AG04450 (cell line): ENCODE measurements at regions of chr2 and their contacts with region 1.

Region 1: GRCh38 chr2:204325468-204325867 is 219.8 kb upstream of the PARD3B start:
- DNase-seq: peak; percentile 66
- H3K4me3 ChIP-seq: no peak overlapping the region
- H3K27ac ChIP-seq: no peak overlapping the region
- H3K27me3 ChIP-seq: no peaks in the 10 kb centered on the region
- CTCF ChIP-seq: peak; percentile 85

Region 2: DNA sequence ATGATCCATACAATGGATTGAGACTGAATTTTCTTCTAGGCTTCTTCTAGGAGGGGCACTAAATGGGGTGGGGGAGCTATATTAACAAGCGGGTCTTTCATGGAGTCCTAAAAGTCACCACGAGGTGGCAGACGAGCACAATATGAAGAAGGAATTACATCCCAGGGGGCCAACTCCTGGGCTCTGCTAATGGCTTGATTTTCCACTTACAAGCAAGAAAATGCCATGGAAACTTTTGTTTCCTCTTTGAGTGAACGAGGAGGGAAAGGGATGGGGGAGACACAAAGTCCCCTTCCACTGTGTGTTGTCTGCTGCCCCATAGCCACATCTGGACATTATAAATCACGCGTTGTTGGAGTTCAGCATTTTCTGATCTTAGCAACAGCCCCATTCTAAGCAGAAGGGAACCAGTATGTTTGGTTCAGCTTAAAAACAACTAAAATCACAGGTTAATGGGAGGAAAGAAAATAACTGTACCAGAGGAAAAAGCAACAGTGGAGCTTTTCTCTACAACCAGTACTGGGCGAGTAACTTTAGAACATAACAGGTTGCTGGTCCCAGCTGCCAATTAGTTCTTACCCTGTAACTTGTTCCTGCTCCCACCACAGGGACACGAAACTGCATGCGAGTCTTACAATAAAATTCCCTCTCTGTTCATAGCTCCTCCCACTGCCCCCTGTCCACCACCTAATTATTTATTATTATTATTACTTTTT is 65.1 kb before region 1 on chr2:
- CTCF ChIA-PET with region 1: interaction called, 10 read pairs
- POLR2A ChIA-PET with region 1: no interaction called
- DNase-seq: peak; percentile 49
- H3K4me3 ChIP-seq: no peak overlapping the region
- H3K27ac ChIP-seq: no peak overlapping the region
- H3K27me3 ChIP-seq: peaks cover 2% of the 10 kb centered on the region
- CTCF ChIP-seq: peak; percentile 86

Region 3: GRCh38 chr2:204293884-204294747 is 31.4 kb before region 1 on chr2:
- CTCF ChIA-PET with region 1: no interaction called
- POLR2A ChIA-PET with region 1: no interaction called
- DNase-seq: no peak
- H3K4me3 ChIP-seq: no peak overlapping the region
- H3K27ac ChIP-seq: no peak overlapping the region
- H3K27me3 ChIP-seq: no peaks in the 10 kb centered on the region
- CTCF ChIP-seq: no peak

Region 4: GRCh38 chr2:204691911-204692510 is 366.5 kb after region 1 on chr2:
- CTCF ChIA-PET with region 1: interaction called, 24 read pairs
- POLR2A ChIA-PET with region 1: no interaction called
- DNase-seq: peak; percentile 79
- H3K4me3 ChIP-seq: no peak overlapping the region
- H3K27ac ChIP-seq: no peak overlapping the region
- H3K27me3 ChIP-seq: no peaks in the 10 kb centered on the region
- CTCF ChIP-seq: peak; percentile 87